Mammary epithelial cell (primary cell): ENCODE measurements at regions of chr5 and their contacts with region 1.

Region 1: GRCh38 chr5:134503088-134503946 is 22.2 kb upstream of the JADE2 start:
- DNase-seq: peak; percentile 99
- H3K4me3 ChIP-seq: no peak overlapping the region
- H3K27ac ChIP-seq: peak overlapping the region; percentile 65
- H3K4me1 ChIP-seq: peaks cover 44% of the 10 kb centered on the region
- H3K27me3 ChIP-seq: no peaks in the 10 kb centered on the region
- CTCF ChIP-seq: peak in 1 of 2 donors; percentile 3

Region 2: GRCh38 chr5:134111741-134112647 is 391.3 kb before region 1 on chr5:
- CTCF ChIA-PET with region 1: no interaction called
- dilution Hi-C with region 1: no loop called
- in situ Hi-C with region 1: no loop called
- intact Hi-C with region 1: no loop called
- DNase-seq: peak; percentile 52
- H3K4me3 ChIP-seq: no peak overlapping the region
- H3K27ac ChIP-seq: no peak overlapping the region
- H3K4me1 ChIP-seq: peaks cover 27% of the 10 kb centered on the region
- H3K27me3 ChIP-seq: no peaks in the 10 kb centered on the region
- CTCF ChIP-seq: no peak

Region 3: DNA sequence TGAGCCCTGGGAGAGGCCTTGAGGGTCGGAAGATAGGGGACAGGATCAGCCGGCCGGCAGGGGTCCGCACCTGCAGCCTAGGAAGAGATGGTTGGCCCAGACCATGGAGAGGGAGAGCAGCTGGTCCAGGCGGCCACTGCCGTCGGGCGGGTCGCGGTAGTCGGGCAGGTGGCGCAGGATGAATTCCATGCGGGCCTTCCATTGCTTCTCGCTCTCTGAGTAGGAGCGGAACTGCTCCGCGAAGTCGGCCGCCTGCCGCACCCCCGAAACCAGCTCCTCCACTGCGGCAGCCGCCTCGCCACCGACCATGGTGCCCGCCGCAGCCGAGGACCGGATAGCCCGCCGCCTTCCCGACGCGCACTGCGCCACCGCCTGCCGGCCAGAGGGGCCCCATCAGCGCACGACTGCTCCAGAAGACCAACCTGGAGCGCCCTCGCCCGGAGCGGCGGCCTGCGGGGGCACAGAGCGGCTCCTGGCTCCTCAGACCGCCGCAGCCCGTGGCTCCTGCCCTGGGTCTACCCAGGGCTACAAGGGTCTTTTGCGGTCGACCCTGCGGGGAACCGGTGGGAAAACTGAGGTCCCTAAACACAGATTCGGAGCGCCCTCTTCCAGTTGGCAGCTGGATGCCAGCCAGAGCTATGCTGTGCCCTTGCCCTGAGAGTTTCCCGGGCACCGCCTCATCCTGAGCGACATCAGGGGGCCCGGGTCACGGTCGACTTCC is 91.6 kb before region 1 on chr5 and contains the start of gene CDKN2AIPNL:
- CTCF ChIA-PET with region 1: no interaction called
- dilution Hi-C with region 1: no loop called
- in situ Hi-C with region 1: no loop called
- intact Hi-C with region 1: loop called (anchors 1 kb)
- DNase-seq: peak; percentile 81
- H3K4me3 ChIP-seq: peak within 1 kb of the TSS; percentile 85 to 91 (median 87)
- H3K27ac ChIP-seq: peak within 1 kb of the TSS; percentile 28
- H3K4me1 ChIP-seq: peaks cover 22% of the 10 kb centered on the region
- H3K27me3 ChIP-seq: no peaks in the 10 kb centered on the region
- CTCF ChIP-seq: peak; percentile 35 to 77
- total RNA-seq, gene CDKN2AIPNL: 28.7 to 30.0 TPM

Region 4: GRCh38 chr5:134465816-134466240 is 37.5 kb before region 1 on chr5:
- CTCF ChIA-PET with region 1: interaction called, 4 read pairs
- dilution Hi-C with region 1: no loop called
- in situ Hi-C with region 1: no loop called
- intact Hi-C with region 1: loop called (anchors 1 kb)
- DNase-seq: peak; percentile 86
- H3K4me3 ChIP-seq: peak overlapping the region in 2 of 3 experiments; percentile 20 to 36
- H3K27ac ChIP-seq: peak overlapping the region; percentile 81
- H3K4me1 ChIP-seq: peaks cover 34% of the 10 kb centered on the region
- H3K27me3 ChIP-seq: no peaks in the 10 kb centered on the region
- CTCF ChIP-seq: no peak